Right ventricle myocardium superior (tissue), 1 donor: ENCODE measurements at regions of chr9 and their contacts with region 1.

Region 1: GRCh38 chr9:70340572-70340971 is 73.9 kb downstream of the KLF9 start:
- DNase-seq: no peak
- ATAC-seq: no peak

Region 2: GRCh38 chr9:70609542-70610286 is 269.1 kb after region 1 on chr9:
- intact Hi-C with region 1: loop called (anchors 5 kb)
- DNase-seq: no peak
- ATAC-seq: peak; percentile 61

Region 3: DNA sequence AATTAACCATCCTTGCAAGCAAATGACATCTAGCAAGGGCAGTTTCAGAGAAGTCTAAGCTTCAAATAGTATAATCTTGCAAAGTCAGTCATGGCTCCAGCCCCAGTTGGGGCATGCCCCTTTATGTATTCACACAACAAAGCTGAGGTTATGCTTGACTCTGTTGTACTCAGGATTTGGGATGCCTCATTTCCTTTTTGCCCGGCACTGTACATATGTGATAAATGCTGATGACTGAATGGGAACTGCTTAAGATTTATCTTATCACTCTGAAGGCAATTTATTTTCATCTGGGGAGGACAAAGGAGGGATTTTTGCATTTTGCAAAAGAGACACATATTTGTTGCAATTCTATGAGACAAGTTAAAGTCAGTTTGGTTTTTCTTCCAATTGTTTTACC is 561.6 kb after region 1 on chr9:
- intact Hi-C with region 1: no loop called
- DNase-seq: no peak
- ATAC-seq: no peak